AG04449 (cell line): ENCODE measurements at regions of chr5 and their contacts with region 1.

Region 1: DNA sequence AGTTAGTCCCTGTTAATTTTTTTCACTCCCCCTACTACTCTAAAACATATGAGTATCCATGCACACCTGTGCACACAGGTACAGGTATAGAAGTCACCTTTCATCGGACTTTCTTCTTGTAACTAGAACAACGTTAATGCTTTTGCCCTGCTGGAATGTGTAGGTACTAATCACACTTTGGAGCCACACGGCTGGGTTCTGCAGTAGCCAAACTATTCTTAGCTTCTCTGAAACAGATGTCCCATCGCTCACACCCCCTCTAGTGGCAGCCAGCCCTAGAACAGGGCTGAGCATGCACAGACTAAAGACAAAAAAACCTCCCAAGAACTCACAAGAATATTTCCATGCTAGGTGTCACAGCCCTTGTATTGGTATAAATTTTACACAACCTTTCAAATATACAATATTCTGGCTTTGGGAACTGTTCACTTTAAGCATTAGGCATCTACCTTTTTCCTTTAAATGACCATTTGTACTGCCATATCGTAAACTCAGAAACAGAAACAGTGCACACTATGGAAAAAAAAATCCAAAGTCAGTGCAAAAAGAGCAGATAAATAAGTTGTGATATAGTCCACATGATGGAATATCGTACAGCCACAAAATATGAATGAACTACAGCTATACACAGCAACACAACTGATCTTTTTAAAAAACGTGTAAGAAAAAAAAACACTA is 64.0 kb downstream of the RETREG1 start:
- DNase-seq: no peak
- H3K4me3 ChIP-seq: no peak overlapping the region
- CTCF ChIP-seq: peak; percentile 78

Region 2: DNA sequence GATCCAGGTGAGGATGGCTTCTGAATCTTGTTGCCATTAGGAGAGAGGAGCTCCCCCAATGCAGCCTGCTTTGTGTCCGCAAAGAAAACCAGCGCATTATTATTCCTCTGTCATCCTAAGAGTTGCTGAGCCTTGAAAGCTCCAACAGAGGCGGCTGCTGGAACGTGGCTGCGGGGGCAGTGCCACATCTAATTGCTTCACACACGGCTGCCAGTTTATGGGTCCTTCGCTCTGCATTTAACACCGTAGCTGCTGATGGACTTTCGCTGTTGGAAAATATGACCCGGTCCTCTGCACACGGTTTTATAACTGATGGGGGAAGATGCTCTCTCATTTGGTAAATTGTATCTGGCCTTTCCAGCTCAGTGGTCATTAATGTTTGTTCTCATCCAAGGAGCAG is 125.2 kb before region 1 on chr5:
- CTCF ChIA-PET with region 1: no interaction called
- POLR2A ChIA-PET with region 1: no interaction called
- DNase-seq: no peak
- H3K4me3 ChIP-seq: no peak overlapping the region
- CTCF ChIP-seq: no peak

Region 3: GRCh38 chr5:16471387-16471786 is 81.4 kb before region 1 on chr5:
- CTCF ChIA-PET with region 1: interaction called, 31 read pairs
- POLR2A ChIA-PET with region 1: no interaction called
- DNase-seq: no peak
- H3K4me3 ChIP-seq: no peak overlapping the region
- CTCF ChIP-seq: no peak

Region 4: GRCh38 chr5:16489322-16489791 is 63.4 kb before region 1 on chr5:
- CTCF ChIA-PET with region 1: interaction called, 254 read pairs
- POLR2A ChIA-PET with region 1: no interaction called
- DNase-seq: peak; percentile 14
- H3K4me3 ChIP-seq: no peak overlapping the region
- CTCF ChIP-seq: peak; percentile 60

Region 5: DNA sequence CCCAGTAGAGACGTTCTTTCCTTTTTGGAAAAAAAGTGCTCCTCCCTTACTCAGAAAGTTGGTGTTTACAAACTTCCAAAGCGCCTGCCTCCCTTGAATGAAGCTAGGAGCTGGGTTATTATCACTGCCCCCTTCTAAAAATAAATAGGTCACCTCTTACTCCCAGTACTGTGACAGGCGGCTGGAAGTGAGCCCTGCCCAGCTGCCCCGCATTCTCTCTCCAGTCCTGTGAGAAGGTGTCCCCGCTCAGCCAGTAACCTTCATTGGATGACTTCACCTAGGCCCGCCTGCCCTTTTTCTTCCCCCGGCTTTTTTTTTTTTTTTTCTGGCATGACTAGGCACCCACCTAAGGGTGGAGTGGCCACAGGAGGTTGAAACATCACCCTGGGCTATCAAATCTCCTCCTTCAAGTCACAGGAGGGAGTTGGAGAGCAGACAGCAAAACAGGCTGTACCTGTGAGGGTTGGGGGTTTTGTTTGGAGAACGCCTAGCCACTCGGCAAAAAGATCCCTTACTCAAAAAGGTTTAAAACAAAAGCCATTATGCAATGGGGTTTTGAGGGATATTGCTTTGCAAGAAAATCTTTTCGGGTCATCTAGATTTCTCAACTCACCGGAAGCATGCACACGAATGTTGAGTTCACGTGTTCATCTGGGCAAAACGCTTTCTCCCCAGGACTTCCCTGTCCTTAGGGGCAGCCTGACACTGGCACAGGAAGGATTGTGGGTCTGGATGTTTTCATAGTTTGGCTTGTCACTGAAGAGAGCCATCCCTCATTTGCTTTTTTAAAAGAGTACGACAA is 43.9 kb before region 1 on chr5:
- CTCF ChIA-PET with region 1: interaction called, 17 read pairs
- POLR2A ChIA-PET with region 1: no interaction called
- DNase-seq: no peak
- H3K4me3 ChIP-seq: no peak overlapping the region
- CTCF ChIP-seq: no peak

Region 6: DNA sequence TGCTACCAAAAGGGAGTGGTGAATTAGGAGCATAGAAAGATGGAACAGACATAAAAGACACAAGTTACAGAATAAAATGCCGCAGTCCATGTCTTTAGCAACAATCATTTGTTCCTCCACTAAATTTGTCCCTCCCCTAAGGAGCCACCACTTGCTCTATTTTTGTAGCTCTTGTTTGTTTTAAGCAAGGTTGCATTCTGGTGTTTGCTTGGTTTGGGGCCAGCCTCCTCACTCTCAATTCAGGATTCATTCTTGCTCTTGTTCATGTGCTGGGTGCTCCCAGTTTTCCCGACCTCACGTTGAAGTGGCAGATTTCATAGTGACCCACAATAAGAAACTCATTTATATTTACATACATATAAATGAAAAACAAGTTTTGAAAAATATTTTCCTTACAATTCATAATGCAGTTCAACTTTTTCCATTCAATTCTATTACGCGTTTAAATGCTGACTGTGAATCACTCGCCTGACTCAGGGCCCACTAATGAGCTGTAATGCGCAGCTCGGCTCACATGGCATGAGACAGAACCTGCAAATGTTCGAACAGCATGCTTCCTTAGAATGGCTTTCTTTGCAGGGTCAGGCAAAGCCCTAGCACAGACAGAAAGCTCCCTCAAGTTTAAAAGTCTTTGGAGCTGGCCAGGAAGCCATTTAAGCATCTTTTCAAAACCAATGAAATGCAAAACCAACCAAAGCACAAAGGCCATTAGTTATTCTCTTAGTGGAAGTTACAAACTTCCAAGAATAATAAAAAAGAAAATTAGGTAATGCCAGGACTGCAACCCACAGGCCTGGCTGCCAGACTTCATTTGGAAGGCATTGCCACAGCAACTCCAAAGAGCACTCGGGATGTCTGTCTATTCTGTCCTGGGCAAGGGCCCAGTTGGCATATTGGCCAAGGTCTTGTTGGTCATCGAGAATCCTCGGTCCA is 22.2 kb after region 1 on chr5:
- CTCF ChIA-PET with region 1: interaction called, 293 read pairs
- POLR2A ChIA-PET with region 1: no interaction called
- DNase-seq: peak; percentile 61
- H3K4me3 ChIP-seq: no peak overlapping the region
- CTCF ChIP-seq: no peak